ENCODE measurements at regions of chr11 and their contacts with region 1.

Region 1: GRCh38 chr11:14892036-14892567 is at the start of gene CYP2R1:
- DNase-seq: peak; percentile 94 to 97
- ATAC-seq: peak; percentile 98 to 99 (median 99)
- H3K4me3 ChIP-seq: peak within 1 kb of the TSS; percentile 57 to 94 (median 84)
- H3K27ac ChIP-seq: peak within 1 kb of the TSS; percentile 16 to 96 (median 90)
- H3K4me1 ChIP-seq: peaks cover 0 to 36% (median 10%) of the 10 kb centered on the region in 9 donors
- H3K27me3 ChIP-seq: no peaks in the 10 kb centered on the region
- CTCF ChIP-seq: peak in 1 of 9 donors; percentile 11
- total RNA-seq, gene CYP2R1: 4.6 to 7.3 (median 6.3) TPM

Region 2: DNA sequence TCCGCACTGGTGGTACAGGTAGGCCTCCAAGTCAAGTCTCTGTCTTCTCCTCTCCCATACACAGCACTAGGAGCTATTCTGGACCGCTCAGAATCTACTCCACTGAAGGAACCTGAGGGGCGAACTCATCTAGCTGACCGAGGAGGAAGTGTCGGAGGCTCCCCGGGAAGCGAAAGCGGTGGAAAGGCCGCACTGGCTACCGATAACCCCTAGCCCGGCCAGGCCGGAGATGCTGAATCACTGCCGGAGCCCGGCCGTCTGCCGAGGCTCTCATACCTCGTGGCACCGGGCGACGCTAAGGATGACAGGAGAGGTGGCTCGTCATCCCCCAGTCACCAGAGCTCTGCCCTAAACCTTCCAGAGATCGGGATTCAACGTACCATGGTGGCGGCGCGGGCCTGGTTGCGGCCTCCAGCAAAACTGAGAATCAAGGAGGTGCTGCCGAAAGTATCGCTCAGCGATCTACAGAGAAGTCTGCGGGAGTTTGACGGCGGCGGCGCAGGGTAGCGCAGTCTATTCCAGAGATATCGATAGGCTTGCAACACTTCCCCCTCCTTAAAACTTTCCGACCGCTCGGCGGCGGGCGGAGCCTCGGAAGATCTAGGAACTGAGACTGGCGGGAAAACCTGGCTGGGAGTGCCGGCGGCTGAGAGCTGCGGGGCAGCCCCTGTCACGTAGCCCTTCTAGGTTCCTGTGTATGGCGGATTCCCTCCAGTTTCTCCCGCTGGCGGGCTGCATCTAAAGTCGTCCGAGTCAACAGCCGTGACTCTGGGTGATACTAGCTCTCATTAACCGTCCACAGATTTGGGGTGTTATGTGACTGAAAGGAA is 372.0 kb before region 1 on chr11 and contains the start of gene PSMA1:
- intact Hi-C with region 1: loop called in 5 of 10 experiments (anchors 2 to 10 kb)
- DNase-seq: peak; percentile 92 to 94
- ATAC-seq: peak; percentile 98 to 99 (median 99)
- H3K4me3 ChIP-seq: peak within 1 kb of the TSS; percentile 63 to 98 (median 82)
- H3K27ac ChIP-seq: peak within 1 kb of the TSS; percentile 66 to 96 (median 92)
- H3K4me1 ChIP-seq: peaks cover 0 to 31% (median 19%) of the 10 kb centered on the region in 9 donors
- H3K27me3 ChIP-seq: no peaks in the 10 kb centered on the region
- CTCF ChIP-seq: peak; percentile 25 to 58 (median 42)
- total RNA-seq, gene PSMA1: 117 to 147 (median 124) TPM

Region 3: DNA sequence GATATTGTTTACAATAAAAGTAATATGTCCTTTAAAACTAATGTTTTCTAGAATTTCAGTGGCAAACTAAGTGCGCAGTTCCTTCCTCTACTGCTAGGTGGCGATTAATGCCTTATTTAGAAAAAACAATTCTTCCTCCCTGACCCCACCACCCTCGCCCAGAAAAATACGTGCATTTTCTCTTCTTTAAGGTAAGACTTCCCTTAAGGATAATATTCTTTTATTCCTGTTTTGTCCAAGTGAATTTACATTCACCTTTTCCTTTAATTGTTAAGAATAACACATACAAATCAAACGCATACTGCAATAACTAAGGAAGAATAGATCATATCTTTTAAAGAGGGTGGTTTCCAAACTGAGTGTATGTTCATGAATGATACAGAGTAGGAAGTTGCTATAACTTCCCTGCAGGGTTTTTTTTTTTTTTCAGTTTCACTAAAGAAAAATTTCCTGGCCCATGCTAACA is 354.9 kb before region 1 on chr11:
- intact Hi-C with region 1: loop called in 2 of 10 experiments (anchors 5 kb)
- DNase-seq: peak in 1 of 2 donors; percentile 28
- ATAC-seq: no peak
- H3K4me3 ChIP-seq: peak overlapping the region in 1 of 10 donors; percentile 24
- H3K27ac ChIP-seq: peak overlapping the region in 4 of 10 donors; percentile 46 to 72 (median 58)
- H3K4me1 ChIP-seq: peaks cover 0 to 51% (median 44%) of the 10 kb centered on the region in 9 donors
- H3K27me3 ChIP-seq: no peaks in the 10 kb centered on the region
- CTCF ChIP-seq: peak; percentile 66 to 84 (median 79)

Measured in heart right ventricle (tissue), 16 donors.